Common myeloid progenitor, CD34-positive (primary cell): ENCODE measurements at regions of chr11 and their contacts with region 1.

Region 1: GRCh38 chr11:75342903-75343870 is 8.3 kb downstream of the ARRB1 start:
- DNase-seq: peak in 2 of 3 donors; percentile 39 to 45
- H3K4me3 ChIP-seq: peak overlapping the region in 1 of 7 experiments; percentile 17
- H3K27ac ChIP-seq: peak overlapping the region in 1 of 2 experiments; percentile 85
- H3K4me1 ChIP-seq: peaks cover 35 to 100% (median 99%) of the 10 kb centered on the region in 4 experiments
- H3K27me3 ChIP-seq: no peaks in the 10 kb centered on the region

Region 2: DNA sequence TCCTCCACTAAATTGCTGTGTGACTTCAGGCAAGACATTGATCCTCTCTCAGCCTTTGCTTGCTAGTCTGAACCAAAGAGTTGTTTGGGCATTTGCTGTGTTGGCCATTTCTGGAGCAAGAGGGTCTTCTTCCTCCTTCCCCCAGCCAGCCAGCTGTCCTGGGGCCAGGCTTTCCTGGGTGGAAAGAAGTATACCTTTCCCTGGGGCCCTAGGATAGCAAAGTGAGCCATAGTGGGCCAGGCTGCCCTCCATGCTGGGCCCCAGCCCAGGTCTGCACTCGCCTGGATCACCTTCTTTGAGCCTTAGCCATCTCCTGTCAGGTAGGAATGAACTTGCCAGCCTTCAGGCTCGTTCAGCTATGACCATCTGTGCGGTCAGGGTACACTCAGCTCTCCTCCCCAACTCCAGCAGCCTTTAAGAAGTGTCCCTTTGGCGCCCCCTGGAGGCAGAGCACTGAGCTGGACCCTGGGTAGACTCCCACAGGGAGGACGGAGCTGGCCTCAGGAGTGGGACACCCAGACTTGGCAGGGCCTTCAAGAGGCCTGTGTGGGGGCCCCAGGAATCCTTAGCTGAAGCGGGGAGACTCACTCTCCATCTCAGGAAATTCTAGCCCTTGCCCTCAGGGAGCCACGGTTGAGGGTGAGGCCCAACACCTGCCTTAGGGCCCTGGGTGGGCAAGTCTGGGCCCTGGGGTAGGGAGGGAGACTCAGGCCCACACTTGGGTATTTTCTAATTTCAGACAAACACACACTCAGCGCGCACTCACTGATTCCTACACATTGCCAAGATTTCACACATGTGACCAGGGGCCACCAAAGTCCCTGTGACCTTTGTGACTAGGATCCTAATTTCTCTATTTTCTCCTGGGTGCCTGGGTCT is 138.3 kb before region 1 on chr11:
- CTCF ChIA-PET with region 1: no interaction called
- POLR2A ChIA-PET with region 1: no interaction called
- DNase-seq: peak; percentile 69 to 87 (median 79)
- H3K4me3 ChIP-seq: no peak overlapping the region
- H3K27ac ChIP-seq: no peak overlapping the region
- H3K4me1 ChIP-seq: no peaks in the 10 kb centered on the region
- H3K27me3 ChIP-seq: peaks cover 0 to 25% (median 10%) of the 10 kb centered on the region in 5 experiments

Region 3: GRCh38 chr11:75371941-75372789 is 29.0 kb after region 1 on chr11:
- CTCF ChIA-PET with region 1: interaction called, 455 read pairs
- POLR2A ChIA-PET with region 1: no interaction called
- DNase-seq: no peak
- H3K4me3 ChIP-seq: peak overlapping the region in 1 of 7 experiments; percentile 2
- H3K27ac ChIP-seq: peak overlapping the region in 1 of 2 experiments; percentile 34
- H3K4me1 ChIP-seq: peaks cover 0 to 59% (median 22%) of the 10 kb centered on the region in 4 experiments
- H3K27me3 ChIP-seq: no peaks in the 10 kb centered on the region

Region 4: DNA sequence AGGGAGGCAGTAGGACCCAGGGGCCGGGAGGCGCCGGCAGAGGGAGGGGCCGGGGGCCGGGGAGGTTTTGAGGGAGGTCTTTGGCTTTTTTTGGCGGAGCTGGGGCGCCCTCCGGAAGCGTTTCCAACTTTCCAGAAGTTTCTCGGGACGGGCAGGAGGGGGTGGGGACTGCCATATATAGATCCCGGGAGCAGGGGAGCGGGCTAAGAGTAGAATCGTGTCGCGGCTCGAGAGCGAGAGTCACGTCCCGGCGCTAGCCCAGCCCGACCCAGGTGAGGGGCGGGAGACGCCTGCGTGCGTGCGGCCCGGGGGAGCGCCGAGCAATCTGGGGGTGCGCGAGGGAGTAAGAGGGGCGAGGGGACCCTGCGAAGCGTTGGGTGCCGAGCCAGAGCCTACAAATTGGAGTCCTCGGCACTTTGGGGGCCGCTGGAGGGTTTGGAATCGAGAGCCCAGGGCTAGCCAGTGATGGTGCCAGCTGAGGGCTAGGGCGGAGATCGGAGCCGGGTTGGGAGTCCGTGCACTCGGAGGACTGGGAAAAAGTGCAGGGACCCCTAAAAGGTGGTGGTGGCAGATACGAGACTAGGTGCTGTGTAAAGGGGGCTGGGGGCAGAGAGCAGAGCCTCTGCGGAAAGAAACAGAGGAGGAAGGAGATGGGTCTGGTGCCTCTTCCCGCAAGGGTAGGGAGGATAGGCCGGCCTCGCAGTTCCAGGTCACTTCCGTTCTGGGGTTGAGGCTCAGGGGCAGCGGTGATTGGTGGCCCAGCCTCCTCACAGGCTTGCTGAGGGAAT is 219.1 kb after region 1 on chr11 and contains the start of gene SERPINH1:
- CTCF ChIA-PET with region 1: no interaction called
- POLR2A ChIA-PET with region 1: no interaction called
- DNase-seq: peak in 2 of 3 donors; percentile 44 to 54
- H3K4me3 ChIP-seq: peak within 1 kb of the TSS; percentile 80 to 89 (median 85)
- H3K27ac ChIP-seq: peak within 1 kb of the TSS in 1 of 2 experiments; percentile 75
- H3K4me1 ChIP-seq: peaks cover 0 to 49% (median 27%) of the 10 kb centered on the region in 4 experiments
- H3K27me3 ChIP-seq: no peaks in the 10 kb centered on the region